ENCODE measurements at regions of chr17 and their contacts with region 1.

Region 1: DNA sequence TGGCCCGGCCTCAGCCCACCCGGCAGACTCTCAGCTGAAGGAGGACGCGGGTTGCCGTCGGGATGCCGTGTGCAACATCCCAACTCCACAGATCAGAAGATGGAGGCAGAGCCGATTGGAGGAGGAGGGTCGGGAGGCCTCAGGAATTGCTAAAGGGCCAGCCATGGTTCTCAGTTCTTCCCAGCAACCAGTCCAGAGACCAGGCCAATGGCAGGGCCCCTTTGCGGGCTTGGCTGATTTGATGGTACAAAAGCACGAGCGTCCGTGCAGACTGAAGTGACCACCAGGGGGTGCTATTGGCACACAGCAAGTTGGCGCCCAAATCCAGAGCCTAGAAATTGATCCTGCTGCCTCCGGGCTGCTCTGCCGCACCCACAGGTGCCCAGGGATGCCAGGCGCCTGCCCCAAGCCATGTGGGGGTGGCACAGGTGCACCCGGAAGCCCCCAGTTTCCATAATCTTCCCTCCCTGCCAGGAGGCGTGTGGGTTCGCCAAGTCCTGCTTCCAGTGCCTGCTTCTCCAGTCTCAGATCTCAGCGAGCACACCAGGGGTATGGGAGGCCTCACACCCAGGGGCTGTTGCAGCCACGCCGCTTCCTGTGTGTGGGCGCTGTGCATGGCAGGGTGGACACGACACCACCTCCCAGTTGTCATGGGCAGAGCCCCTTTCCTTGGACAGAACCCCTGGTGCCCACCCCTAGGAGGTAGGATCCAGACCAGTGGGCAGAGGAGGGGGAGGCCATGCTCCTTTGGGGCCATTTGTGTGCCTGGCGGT is 7.1 kb upstream of the TEX19 start:
- DNase-seq: peak; percentile 79 to 90
- ATAC-seq: peak; percentile 82 to 95 (median 90)
- H3K4me3 ChIP-seq: no peak overlapping the region
- H3K27ac ChIP-seq: no peak overlapping the region
- H3K4me1 ChIP-seq: no peaks in the 10 kb centered on the region
- H3K27me3 ChIP-seq: peaks cover 0 to 14% (median 5%) of the 10 kb centered on the region in 3 donors
- CTCF ChIP-seq: peak; percentile 98

Region 2: GRCh38 chr17:82300707-82301270 is 51.1 kb before region 1 on chr17:
- intact Hi-C with region 1: loop called in 1 of 2 experiments (anchors 1 kb)
- DNase-seq: peak; percentile 76 to 87
- ATAC-seq: peak in 2 of 4 donors; percentile 33 to 36
- H3K4me3 ChIP-seq: no peak overlapping the region
- H3K27ac ChIP-seq: no peak overlapping the region
- H3K4me1 ChIP-seq: peaks cover 23% of the 10 kb centered on the region
- H3K27me3 ChIP-seq: no peaks in the 10 kb centered on the region
- CTCF ChIP-seq: peak; percentile 74

Region 3: DNA sequence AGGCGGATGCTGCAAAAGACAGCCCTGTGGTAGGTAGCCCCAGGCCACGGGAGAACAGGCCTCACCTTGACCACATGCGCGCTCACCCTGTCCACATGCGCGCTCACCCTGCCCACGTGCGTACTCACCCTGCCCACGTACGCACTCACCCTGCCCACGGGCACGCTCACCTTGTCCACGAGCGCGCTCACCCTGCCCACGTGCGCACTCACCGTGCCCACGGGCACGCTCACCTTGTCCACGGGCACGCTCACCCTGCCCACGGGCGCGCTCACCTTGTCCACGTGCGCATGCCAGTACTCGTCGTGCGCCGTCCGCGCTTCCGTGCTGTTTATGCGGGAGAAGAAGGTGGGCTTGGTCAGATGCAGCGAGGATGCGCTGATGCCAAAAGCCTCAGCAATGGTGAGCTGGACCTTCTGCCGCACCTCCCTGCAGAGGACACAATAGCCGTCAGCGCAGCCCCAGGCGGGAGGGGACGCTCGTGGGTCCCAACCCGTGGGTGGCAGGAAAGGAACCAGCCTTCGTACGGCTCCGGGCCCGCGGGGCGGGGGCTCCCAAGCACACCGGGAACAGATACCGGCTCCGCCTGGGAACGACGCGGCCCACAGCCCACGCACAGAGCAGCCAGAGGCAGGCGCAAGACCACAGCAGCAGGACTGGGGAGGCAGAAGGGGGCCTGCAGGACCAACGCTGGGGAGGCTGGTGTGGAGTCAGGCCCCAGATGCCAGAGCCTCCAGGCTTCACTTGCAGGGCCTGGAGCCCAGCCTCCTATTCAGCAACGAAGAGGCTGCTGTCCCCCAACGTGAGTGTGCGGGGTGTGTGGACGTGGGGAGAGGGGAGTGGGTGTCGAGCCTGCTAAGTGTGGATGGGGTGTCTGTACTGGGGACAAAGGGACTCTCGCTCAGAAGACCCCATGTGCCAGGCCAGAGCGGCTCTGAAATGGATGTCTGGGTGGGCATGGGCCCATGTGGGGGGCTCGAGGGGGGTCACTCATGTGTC is 52.1 kb after region 1 on chr17:
- intact Hi-C with region 1: loop called in 1 of 2 experiments (anchors 2 kb)
- DNase-seq: no peak
- ATAC-seq: no peak
- H3K4me3 ChIP-seq: no peak overlapping the region
- H3K27ac ChIP-seq: no peak overlapping the region
- H3K4me1 ChIP-seq: peaks cover 26% of the 10 kb centered on the region
- H3K27me3 ChIP-seq: no peaks in the 10 kb centered on the region
- CTCF ChIP-seq: no peak

Region 4: DNA sequence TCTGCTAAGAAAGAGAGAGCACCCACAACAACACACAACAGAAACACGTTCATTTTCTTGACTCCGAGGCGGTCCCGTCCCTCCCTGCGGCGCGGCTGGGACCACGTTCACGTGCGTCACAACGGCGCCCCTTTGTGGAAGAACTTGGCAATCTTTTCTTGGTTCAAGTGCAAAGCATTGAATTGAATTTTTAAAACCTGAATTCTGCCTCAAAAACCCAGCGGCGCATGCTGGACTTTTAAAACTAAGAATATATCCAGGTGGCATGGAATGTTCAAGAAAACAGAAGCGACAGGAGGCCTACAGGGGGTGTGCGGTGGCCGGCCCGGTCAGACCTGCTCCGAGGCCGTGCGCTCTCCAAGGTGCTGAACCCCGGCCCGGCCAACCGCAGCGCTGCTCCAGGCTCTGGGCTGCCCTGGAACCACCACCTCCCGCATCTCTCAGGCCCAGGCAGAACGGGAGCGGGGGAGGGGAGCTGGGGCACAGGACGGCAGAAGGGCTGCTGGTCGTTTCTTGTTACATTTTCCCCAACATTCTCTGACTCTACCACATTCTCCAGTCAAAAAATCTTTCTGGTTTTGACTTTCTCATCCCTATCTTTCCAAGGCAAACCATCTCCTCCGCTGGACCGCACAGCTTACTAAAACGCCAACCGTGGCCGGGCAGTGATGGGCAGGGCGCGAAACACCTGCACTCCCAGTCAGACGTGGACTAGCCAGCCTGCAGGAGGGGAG is 62.8 kb after region 1 on chr17:
- intact Hi-C with region 1: loop called (anchors 1 to 2 kb)
- DNase-seq: peak; percentile 78 to 84
- ATAC-seq: peak; percentile 67 to 79 (median 72)
- H3K4me3 ChIP-seq: no peak overlapping the region
- H3K27ac ChIP-seq: no peak overlapping the region
- H3K4me1 ChIP-seq: peaks cover 15% of the 10 kb centered on the region
- H3K27me3 ChIP-seq: no peaks in the 10 kb centered on the region
- CTCF ChIP-seq: peak; percentile 70

Region 5: GRCh38 chr17:82551779-82552457 is 200.0 kb after region 1 on chr17:
- intact Hi-C with region 1: loop called (anchors 5 to 10 kb)
- DNase-seq: peak; percentile 69 to 82
- ATAC-seq: peak; percentile 78 to 81 (median 79)
- H3K4me3 ChIP-seq: no peak overlapping the region
- H3K27ac ChIP-seq: peak overlapping the region; percentile 78
- H3K4me1 ChIP-seq: peaks cover 55% of the 10 kb centered on the region
- H3K27me3 ChIP-seq: no peaks in the 10 kb centered on the region
- CTCF ChIP-seq: peak; percentile 72

Region 6: GRCh38 chr17:82775001-82775823 is 423.3 kb after region 1 on chr17:
- intact Hi-C with region 1: loop called in 1 of 2 experiments (anchors 5 kb)
- DNase-seq: peak; percentile 71 to 84
- ATAC-seq: peak; percentile 65 to 85 (median 72)
- H3K4me3 ChIP-seq: peak overlapping the region; percentile 52
- H3K27ac ChIP-seq: no peak overlapping the region
- H3K4me1 ChIP-seq: no peaks in the 10 kb centered on the region
- H3K27me3 ChIP-seq: no peaks in the 10 kb centered on the region
- CTCF ChIP-seq: peak; percentile 86